Activated B cell treated with CpG ODN at 0.5 μM for 24 hours (primary cell): ENCODE measurements at regions of chr11 and their contacts with region 1.

Region 1: DNA sequence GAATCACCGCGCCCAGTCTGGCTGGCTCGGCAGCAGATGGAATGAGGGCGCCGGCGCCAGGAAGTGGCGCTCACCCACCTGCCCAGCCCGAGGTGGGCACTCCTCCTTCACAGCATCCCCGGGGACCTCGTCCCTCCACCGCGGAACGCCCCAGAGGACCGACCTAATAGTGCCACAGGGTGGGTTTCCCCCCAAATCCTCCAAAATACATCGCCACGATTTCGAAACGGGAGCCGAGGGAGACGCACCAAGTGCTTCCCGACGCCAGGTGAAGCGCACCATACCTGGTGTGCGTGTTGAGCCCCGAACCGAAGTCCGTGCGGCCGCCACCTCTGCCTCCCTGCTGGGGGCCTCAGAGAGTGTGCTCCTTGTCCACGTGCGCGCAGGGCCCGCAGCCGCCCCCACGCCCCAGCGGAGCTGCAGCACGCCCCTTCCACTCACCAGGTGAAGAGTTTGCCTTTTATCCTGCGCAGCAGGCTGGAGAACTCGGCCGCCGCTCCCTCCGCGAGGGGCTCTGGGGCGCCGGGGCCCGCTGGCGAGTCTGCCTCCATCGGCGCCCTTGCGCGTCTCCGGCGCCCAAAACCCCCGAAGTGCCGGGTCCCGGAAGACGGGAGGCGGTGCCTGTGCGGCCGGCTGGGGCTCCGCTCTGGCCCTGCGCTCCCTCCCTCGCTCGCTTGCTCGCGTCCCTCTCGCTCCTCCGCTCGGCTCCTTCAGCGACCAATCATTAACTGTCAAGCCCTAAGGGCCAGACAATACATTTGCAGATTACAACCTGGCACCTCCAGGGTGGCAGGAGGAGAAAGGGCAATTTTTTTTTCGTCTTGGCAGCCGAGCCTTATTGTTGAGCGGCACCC is at the start of gene SLC35F2:
- DNase-seq: peak; percentile 78
- ATAC-seq: peak; percentile 93
- H3K4me3 Mint-ChIP-seq: peak within 1 kb of the TSS; percentile 96
- H3K27ac Mint-ChIP-seq: peak within 1 kb of the TSS; percentile 90
- H3K4me1 Mint-ChIP-seq: peaks cover 30% of the 10 kb centered on the region
- H3K27me3 Mint-ChIP-seq: no peaks in the 10 kb centered on the region
- CTCF ChIP-seq: no peak
- total RNA-seq, gene SLC35F2: 20.5 and 21.9 TPM in 2 replicates

Region 2: DNA sequence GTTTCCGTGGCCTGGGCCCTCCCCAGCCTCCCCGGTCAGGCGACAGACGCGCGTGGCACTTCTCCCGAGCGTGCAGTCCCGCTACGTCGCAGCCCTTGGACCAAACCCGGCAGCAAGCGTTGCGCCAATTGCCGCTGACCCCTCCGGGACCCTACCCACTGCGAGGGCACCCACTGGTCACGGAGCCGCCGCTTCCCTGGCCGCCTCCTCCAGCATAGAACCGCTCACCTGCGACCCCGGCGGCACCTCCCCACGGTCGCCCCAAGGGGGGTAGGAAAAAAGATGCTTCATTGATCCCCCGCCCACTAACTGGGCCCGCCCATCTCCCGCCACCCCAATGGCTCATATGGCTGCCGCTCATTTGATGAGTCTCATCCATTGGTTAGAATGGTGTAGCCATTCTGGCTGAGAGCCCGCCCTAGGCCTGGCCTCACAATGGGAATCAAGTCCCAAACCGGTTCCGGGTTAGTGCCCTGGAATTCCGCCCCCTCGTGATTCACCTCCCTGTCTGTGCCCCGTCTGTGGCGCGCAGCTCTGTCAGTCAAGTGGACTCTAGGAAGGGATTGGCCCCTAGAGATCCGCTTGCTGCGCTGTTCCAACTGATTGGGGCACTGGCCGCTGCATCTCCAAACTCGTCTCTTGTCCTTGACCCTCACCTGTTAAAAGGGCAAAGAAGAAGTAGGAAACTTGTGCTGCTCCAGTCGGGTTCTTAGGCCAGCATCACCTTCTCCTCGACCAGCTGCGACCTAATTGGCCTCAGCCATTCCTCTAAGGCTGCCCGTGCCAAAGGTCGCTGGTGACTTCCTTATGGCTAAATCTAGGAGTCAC is 1836.3 kb before region 1 on chr11 and contains the start of gene MSANTD4:
- CTCF ChIA-PET with region 1: no interaction called
- POLR2A ChIA-PET with region 1: no interaction called
- intact Hi-C with region 1: loop called (anchors 5 kb)
- DNase-seq: peak; percentile 90
- ATAC-seq: peak; percentile 96
- H3K4me3 Mint-ChIP-seq: peak within 1 kb of the TSS; percentile 98
- H3K27ac Mint-ChIP-seq: peak within 1 kb of the TSS; percentile 92
- H3K4me1 Mint-ChIP-seq: peaks cover 43% of the 10 kb centered on the region
- H3K27me3 Mint-ChIP-seq: peaks cover 2% of the 10 kb centered on the region
- CTCF ChIP-seq: no peak
- total RNA-seq, gene MSANTD4: 17.4 and 18.9 TPM in 2 replicates

Region 3: GRCh38 chr11:107457558-107458271 is 400.7 kb before region 1 on chr11 and contains the start of gene CWF19L2:
- CTCF ChIA-PET with region 1: no interaction called
- POLR2A ChIA-PET with region 1: no interaction called
- intact Hi-C with region 1: loop called (anchors 1 kb)
- DNase-seq: peak; percentile 67
- ATAC-seq: peak; percentile 96
- H3K4me3 Mint-ChIP-seq: peak within 1 kb of the TSS; percentile 90
- H3K27ac Mint-ChIP-seq: peak within 1 kb of the TSS; percentile 93
- H3K4me1 Mint-ChIP-seq: peaks cover 25% of the 10 kb centered on the region
- H3K27me3 Mint-ChIP-seq: peaks cover 3% of the 10 kb centered on the region
- CTCF ChIP-seq: no peak
- total RNA-seq, gene CWF19L2: 24.5 and 26.1 TPM in 2 replicates

Region 4: DNA sequence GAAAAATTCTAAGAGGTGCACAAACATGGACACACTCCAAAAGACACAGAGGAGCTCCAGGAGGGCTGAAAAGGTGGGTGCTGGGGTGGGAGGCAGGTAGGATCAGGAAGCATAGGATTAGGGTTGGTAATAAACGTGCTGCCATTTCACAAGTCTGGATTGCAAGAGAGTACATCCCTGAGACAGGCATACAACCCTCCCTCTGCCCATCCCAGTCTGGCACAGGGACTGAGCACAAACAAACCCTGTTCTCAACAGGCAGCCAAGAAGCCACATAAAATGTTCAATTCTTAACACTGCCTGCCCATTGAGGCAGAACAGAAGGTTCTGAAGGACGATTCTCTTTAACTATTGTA is 18.3 kb before region 1 on chr11:
- CTCF ChIA-PET with region 1: no interaction called
- POLR2A ChIA-PET with region 1: interaction called, 6 read pairs
- intact Hi-C with region 1: loop called (anchors 1 kb)
- DNase-seq: no peak
- ATAC-seq: no peak
- H3K4me3 Mint-ChIP-seq: peak overlapping the region; percentile 29
- H3K27ac Mint-ChIP-seq: peak overlapping the region; percentile 90
- H3K4me1 Mint-ChIP-seq: peaks cover 35% of the 10 kb centered on the region
- H3K27me3 Mint-ChIP-seq: no peaks in the 10 kb centered on the region
- CTCF ChIP-seq: no peak

Region 5: GRCh38 chr11:107898270-107898669 is 39.8 kb after region 1 on chr11:
- CTCF ChIA-PET with region 1: no interaction called
- POLR2A ChIA-PET with region 1: no interaction called
- intact Hi-C with region 1: loop called (anchors 2 kb)
- DNase-seq: no peak
- ATAC-seq: peak; percentile 57
- H3K4me3 Mint-ChIP-seq: no peak overlapping the region
- H3K27ac Mint-ChIP-seq: no peak overlapping the region
- H3K4me1 Mint-ChIP-seq: no peaks in the 10 kb centered on the region
- H3K27me3 Mint-ChIP-seq: peaks cover 5% of the 10 kb centered on the region
- CTCF ChIP-seq: no peak

Region 6: GRCh38 chr11:108008656-108009496 is 150.4 kb after region 1 on chr11 and contains the start of gene CUL5:
- CTCF ChIA-PET with region 1: no interaction called
- POLR2A ChIA-PET with region 1: interaction called, 4 read pairs
- intact Hi-C with region 1: loop called (anchors 1 kb)
- DNase-seq: peak; percentile 89
- ATAC-seq: peak; percentile 87
- H3K4me3 Mint-ChIP-seq: peak within 1 kb of the TSS; percentile 99
- H3K27ac Mint-ChIP-seq: peak within 1 kb of the TSS; percentile 96
- H3K4me1 Mint-ChIP-seq: peaks cover 10% of the 10 kb centered on the region
- H3K27me3 Mint-ChIP-seq: no peaks in the 10 kb centered on the region
- CTCF ChIP-seq: no peak
- total RNA-seq, gene CUL5: 38.4 and 42.0 TPM in 2 replicates

Region 7: GRCh38 chr11:108664730-108665525 is 806.5 kb after region 1 on chr11 and contains the start of gene DDX10:
- CTCF ChIA-PET with region 1: no interaction called
- POLR2A ChIA-PET with region 1: no interaction called
- intact Hi-C with region 1: loop called (anchors 1 kb)
- DNase-seq: peak; percentile 95
- ATAC-seq: peak; percentile 100
- H3K4me3 Mint-ChIP-seq: peak within 1 kb of the TSS; percentile 100
- H3K27ac Mint-ChIP-seq: peak within 1 kb of the TSS; percentile 96
- H3K4me1 Mint-ChIP-seq: peaks cover 46% of the 10 kb centered on the region
- H3K27me3 Mint-ChIP-seq: no peaks in the 10 kb centered on the region
- CTCF ChIP-seq: no peak
- total RNA-seq, gene DDX10: 37.7 and 43.3 TPM in 2 replicates